Prostate gland (tissue), 2 donors: ENCODE measurements at regions of chr11 and their contacts with region 1.

Region 1: GRCh38 chr11:8813658-8814057 is 97.3 kb upstream of the AKIP1 start:
- DNase-seq: peak; percentile 35
- H3K4me3 ChIP-seq: no peak overlapping the region
- H3K27ac ChIP-seq: peak overlapping the region; percentile 5 to 29
- H3K4me1 ChIP-seq: no peaks in the 10 kb centered on the region
- H3K27me3 ChIP-seq: no peaks in the 10 kb centered on the region
- CTCF ChIP-seq: peak; percentile 62 to 78 (median 70)
- POLR2A ChIP-seq: no peak

Region 2: DNA sequence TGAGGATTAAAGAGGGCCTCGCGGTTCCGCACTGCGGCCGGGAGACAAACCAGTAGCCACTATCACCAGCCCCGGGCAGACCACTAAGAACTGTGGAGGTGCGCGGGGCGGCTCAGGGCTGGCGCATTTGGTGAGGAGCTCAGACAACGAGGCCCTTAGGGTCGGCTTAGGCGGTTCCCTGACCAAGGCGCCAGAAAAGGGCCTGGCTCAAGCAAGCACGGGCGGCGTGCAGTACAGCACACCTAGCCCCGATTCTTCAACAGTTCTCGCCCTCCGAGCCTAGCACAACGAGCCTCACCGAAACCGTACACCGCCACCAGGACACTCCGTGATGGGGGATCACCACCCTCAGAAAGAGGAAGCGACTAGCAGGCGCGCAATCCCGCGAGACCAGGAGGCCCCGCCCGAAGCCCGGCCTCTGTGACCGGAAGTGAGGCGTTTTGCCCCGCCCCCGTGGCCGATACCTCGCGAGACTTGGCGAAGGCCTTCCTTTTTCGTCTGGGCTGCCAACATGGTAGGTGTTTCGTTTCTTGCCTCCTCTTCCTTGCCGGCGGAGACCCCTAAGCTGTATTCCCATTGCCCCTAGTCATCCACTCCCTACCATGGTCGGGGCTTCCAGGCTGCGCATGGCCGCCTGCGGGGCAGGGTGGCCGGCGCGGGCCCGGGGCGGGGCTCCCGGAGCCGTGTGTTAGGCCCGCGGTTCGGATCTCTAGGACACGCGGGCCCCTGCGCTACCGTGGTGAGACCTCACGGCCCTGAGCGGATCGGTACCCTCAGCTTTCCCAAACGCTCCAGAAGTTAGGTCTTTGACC is 131.1 kb before region 1 on chr11 and contains the starts of genes RPL27A and TRIM66:
- intact Hi-C with region 1: loop called (anchors 5 kb)
- DNase-seq: peak; percentile 97
- H3K4me3 ChIP-seq: peak within 1 kb of the TSS; percentile 83 to 84
- H3K27ac ChIP-seq: peak within 1 kb of the TSS; percentile 91
- H3K4me1 ChIP-seq: peaks cover 8% of the 10 kb centered on the region
- H3K27me3 ChIP-seq: no peaks in the 10 kb centered on the region
- CTCF ChIP-seq: peak in 2 of 4 experiments; percentile 46 to 58
- POLR2A ChIP-seq: peak; percentile 97
- total RNA-seq, gene RPL27A: 693 to 1,360 TPM
- total RNA-seq, gene TRIM66: 2.8 to 10.5 TPM

Region 3: DNA sequence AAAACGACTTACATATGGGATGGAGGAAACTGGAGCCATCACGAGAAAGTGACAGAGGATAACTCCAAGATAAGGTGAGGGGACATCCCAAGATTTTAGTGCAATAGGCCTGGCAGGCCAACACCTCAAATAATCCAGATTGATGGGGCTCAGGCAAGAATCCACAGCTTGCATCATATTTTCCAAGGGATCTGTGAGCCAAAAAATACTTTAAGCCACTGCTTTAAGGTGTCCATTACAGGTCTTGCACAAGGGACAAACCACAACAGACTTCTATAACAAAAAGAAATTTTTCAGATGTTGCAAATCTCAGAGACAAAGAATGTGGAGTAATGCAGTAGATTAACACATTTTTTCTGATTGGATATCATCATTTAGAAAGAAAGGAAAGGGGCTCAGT is 405.9 kb after region 1 on chr11:
- intact Hi-C with region 1: no loop called
- DNase-seq: no peak
- H3K4me3 ChIP-seq: no peak overlapping the region
- H3K27ac ChIP-seq: no peak overlapping the region
- H3K4me1 ChIP-seq: no peaks in the 10 kb centered on the region
- H3K27me3 ChIP-seq: no peaks in the 10 kb centered on the region
- CTCF ChIP-seq: no peak
- POLR2A ChIP-seq: no peak